Activated naive CD4-positive, alpha-beta T cell treated with anti-CD3 and anti-CD28 coated beads, Interleukin-2, amount 10 ng/mL, durations not matched to agents 7 days and 5 days (primary cell): ENCODE measurements at regions of chr10 and their contacts with region 1.

Region 1: DNA sequence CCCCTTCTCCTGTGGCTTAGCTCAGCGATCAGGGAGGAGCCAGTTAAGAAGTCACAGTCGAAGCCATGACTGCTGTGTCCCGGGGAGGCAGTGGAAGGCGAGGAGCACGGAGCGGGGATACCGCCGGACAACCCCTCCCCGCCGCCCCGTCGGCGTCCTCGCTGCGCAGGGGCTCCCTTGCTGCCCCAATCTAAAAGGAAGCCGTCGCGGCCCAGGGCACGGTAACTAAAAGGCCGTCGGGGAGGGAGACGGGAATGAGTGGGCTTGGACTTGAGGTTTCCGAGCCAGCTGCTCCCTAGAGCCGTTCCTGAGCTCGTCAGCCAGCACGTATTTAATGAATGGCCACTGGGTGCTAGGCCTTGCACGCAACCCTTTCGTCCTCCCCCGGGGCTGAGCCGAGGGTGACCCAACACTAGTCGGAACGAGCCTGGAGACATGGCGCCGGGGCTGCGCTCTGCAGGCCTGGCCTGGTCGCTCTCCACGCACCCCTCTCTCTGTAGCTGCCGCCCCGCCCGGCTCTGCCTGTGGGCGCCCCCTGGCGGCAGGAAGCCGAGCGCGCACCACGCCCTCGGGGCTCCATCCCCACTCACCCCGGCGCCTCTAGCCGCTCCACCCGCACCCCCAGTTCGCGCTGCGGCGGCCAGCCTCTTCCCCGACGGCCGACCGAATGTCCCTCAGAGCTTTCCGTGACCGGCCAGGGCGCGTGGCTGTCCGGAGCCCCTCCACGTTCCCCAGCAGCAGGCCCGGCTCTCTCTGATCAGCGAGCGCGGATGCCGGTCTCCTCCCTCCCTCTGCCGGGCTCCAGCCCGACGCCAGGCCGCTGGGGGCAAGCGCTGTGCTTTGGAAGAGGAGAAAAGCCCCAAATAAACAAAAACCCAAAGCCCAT is 29.3 kb upstream of the KCNK18 start:
- DNase-seq: peak; percentile 64
- H3K4me3 Mint-ChIP-seq: peak overlapping the region; percentile 9
- H3K27ac Mint-ChIP-seq: peak overlapping the region; percentile 46
- H3K4me1 Mint-ChIP-seq: peaks cover 13% of the 10 kb centered on the region
- H3K27me3 Mint-ChIP-seq: peaks cover 82% of the 10 kb centered on the region

Region 2: GRCh38 chr10:116796910-116797513 is 371.0 kb before region 1 on chr10:
- CTCF ChIA-PET with region 1: interaction called, 85 read pairs
- DNase-seq: peak; percentile 78
- H3K4me3 Mint-ChIP-seq: no peak overlapping the region
- H3K27ac Mint-ChIP-seq: no peak overlapping the region
- H3K4me1 Mint-ChIP-seq: no peaks in the 10 kb centered on the region
- H3K27me3 Mint-ChIP-seq: peaks cover 20% of the 10 kb centered on the region

Region 3: GRCh38 chr10:117131376-117132327 is 36.4 kb before region 1 on chr10:
- CTCF ChIA-PET with region 1: interaction called, 26 read pairs
- DNase-seq: no peak
- H3K4me3 Mint-ChIP-seq: no peak overlapping the region
- H3K27ac Mint-ChIP-seq: peak overlapping the region; percentile 35
- H3K4me1 Mint-ChIP-seq: peaks cover 15% of the 10 kb centered on the region
- H3K27me3 Mint-ChIP-seq: peaks cover 89% of the 10 kb centered on the region

Region 4: DNA sequence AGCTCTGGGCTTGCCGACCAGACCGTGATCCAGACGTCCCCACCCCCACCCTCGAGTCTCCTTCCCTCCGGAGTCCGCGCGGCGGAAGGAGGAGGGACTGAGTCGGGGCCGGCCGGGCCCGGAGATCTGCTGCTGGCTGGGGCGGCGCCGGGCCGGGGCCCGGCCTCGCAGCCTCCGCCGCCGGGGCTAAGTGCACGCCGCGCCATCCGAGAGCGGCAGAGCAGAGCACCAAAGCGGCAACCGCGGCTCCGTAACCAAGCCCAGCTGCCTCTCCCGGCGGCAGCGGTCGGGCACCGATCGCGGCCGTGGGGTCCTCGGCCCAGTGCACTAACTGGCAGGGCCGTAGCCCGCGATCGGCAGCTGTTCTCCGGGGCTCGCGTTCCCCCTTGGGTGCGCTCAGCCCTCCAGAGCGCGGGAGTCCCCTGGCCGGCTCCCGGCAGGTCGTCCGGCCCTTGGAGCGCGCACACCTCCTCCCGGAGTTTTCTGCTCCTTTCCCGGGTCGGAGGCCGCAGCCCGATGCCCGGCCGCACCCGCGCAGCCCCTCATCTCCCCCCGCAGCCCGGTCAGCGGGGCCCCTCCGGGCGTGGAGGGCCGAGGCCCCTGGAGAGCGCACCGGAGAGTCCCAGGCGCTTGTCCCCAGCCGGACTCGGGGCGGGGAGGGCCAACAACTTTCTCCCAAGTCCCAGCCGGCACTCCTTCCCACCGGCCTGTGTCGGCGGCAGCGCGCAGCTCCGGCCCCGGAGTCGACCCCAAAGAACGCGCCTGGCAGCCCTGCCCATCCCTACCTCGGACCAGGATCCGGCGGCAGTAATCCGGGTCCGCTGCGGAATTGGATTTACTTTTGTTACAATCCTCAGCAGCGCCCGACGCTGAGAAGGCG is 30.8 kb before region 1 on chr10:
- CTCF ChIA-PET with region 1: interaction called, 26 read pairs
- DNase-seq: no peak
- H3K4me3 Mint-ChIP-seq: no peak overlapping the region
- H3K27ac Mint-ChIP-seq: no peak overlapping the region
- H3K4me1 Mint-ChIP-seq: peaks cover 11% of the 10 kb centered on the region
- H3K27me3 Mint-ChIP-seq: peaks cover 100% of the 10 kb centered on the region